Panc1 (cell line): ENCODE measurements at regions of chr3 and their contacts with region 1.

Region 1: GRCh38 chr3:133996251-133996661 is 33.5 kb downstream of the SLCO2A1 start:
- DNase-seq: no peak
- ATAC-seq: 0 out of 2 replicates have a peak, but pooled peaks have one; percentile 40
- H3K4me3 ChIP-seq: no peak overlapping the region
- H3K27ac ChIP-seq: no peak overlapping the region
- H3K4me1 ChIP-seq: no peaks in the 10 kb centered on the region
- H3K27me3 ChIP-seq: no peaks in the 10 kb centered on the region; the same call in 1 of the 2 replicates
- CTCF ChIP-seq: no peak

Region 2: DNA sequence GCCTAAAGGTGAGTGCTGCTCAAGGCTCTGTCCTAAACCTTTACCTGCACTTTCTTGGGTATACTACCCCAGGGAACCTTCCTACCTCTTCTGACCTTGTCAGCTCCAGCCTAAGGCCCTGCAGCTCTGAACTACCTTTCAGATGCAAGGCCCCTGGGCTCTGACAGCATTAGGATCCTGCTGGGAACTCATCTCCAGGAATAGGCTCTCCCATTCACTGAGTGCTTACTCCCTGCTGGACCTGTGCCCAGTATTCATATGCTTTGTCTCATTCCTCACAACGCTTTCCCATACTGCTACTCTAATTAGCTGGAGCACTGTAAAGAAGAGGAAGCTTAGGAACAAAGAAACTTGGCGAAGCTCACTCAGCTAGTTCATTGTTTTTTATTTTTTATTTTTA is 46.8 kb before region 1 on chr3:
- CTCF ChIA-PET with region 1: no interaction called
- POLR2A ChIA-PET with region 1: interaction called, 14 read pairs
- in situ Hi-C with region 1: no loop called
- intact Hi-C with region 1: no loop called
- DNase-seq: no peak
- ATAC-seq: no peak
- H3K4me3 ChIP-seq: no peak overlapping the region
- H3K27ac ChIP-seq: no peak overlapping the region
- H3K4me1 ChIP-seq: peaks cover 20% of the 10 kb centered on the region
- H3K27me3 ChIP-seq: no peaks in the 10 kb centered on the region
- CTCF ChIP-seq: no peak

Region 3: GRCh38 chr3:134008618-134009156 is 12.4 kb after region 1 on chr3:
- CTCF ChIA-PET with region 1: no interaction called
- POLR2A ChIA-PET with region 1: interaction called, 18 read pairs
- in situ Hi-C with region 1: no loop called
- intact Hi-C with region 1: no loop called
- DNase-seq: no peak
- ATAC-seq: peak; percentile 42
- H3K4me3 ChIP-seq: no peak overlapping the region
- H3K27ac ChIP-seq: no peak overlapping the region
- H3K4me1 ChIP-seq: no peaks in the 10 kb centered on the region
- H3K27me3 ChIP-seq: no peaks in the 10 kb centered on the region
- CTCF ChIP-seq: no peak